ENCODE measurements at regions of chr12 and their contacts with region 1.

Region 1: GRCh38 chr12:26195641-26196420 is 458 bp downstream of the SSPN start:
- DNase-seq: peak; percentile 51 to 85
- H3K4me3 ChIP-seq: peak overlapping the region; percentile 76
- H3K27ac ChIP-seq: peak overlapping the region; percentile 87 to 92
- H3K4me1 ChIP-seq: peaks cover 0 to 40% (median 30%) of the 10 kb centered on the region in 4 donors
- H3K27me3 ChIP-seq: no peaks in the 10 kb centered on the region
- CTCF ChIP-seq: peak in 1 of 2 experiments; percentile 5

Region 2: DNA sequence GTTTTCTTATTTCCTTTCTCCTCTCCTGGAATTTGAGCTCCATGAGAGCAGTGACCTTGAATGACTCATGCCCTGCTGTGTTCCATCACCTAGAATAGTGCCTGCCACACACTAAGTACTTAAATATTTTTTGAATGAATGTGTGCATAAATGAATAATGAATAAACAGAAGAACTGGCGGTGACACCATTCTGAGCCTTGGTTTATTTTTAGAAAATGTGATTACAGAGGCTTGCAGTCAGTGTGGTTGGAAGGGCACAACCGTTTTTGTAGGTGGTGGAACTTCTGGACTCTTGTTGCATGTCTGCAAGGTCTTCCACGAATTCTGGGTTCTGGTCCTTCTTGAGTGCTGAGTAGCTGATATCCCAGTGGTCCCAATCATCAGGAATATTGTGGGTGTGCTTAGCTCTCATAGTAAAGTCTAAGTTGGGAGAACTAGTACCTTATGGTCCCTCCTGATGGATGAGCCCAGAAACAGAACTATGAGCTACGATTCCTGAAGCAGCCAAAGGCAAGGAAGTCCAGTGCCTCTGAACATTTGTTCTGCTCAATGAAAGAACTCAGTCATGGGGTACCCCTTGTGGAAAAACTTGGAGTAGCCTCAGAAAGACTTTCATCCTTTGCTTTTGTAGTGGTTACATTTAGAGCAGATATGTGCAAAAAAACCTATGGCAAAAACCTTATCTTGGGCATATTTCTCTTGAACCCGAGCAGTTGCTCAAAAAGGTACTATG is 42.2 kb before region 1 on chr12:
- intact Hi-C with region 1: loop called (anchors 2 kb)
- DNase-seq: no peak
- H3K4me3 ChIP-seq: no peak overlapping the region
- H3K27ac ChIP-seq: peak overlapping the region in 1 of 2 donors; percentile 11
- H3K4me1 ChIP-seq: peaks cover 0 to 35% (median 28%) of the 10 kb centered on the region in 4 donors
- H3K27me3 ChIP-seq: no peaks in the 10 kb centered on the region
- CTCF ChIP-seq: no peak

Region 3: GRCh38 chr12:26274441-26275312 is 78.8 kb after region 1 on chr12:
- intact Hi-C with region 1: loop called (anchors 5 kb)
- DNase-seq: peak; percentile 93 to 94
- H3K4me3 ChIP-seq: no peak overlapping the region
- H3K27ac ChIP-seq: peak overlapping the region; percentile 67 to 85
- H3K4me1 ChIP-seq: peaks cover 0 to 43% (median 37%) of the 10 kb centered on the region in 4 donors
- H3K27me3 ChIP-seq: no peaks in the 10 kb centered on the region
- CTCF ChIP-seq: no peak

Region 4: DNA sequence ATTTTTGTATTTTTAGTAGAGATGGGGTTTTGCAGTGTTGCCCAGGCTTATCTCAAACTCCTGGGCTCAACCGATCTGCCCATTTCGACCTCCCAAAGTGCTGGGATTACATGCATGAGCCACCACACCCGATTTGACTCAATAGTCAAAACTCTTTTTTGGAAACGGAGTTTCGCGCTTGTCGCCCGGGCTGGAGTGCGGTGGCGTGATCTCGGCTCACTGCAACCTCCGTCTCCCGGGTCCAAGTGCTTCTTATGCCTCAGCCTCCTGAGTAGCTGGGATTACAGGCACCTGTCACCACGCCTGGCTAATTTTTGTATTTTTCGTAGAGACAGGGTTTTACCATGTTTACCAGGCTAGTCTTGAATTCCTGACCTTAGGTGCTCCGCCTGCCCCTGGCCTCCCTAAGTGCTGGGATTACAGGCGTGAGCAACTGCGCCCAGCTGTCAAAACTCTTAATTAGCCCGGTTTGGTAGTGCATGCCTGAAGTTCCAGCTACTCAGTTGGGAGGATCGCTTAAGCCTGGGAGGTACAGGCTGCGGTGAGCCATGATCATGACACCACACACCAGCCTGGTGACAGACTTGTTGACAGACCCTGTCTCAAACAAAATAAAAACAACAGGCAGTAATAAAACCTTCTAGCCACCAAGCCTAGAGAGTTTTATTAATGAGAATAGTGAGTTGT is 838.9 kb after region 1 on chr12:
- intact Hi-C with region 1: no loop called
- DNase-seq: no peak
- H3K4me3 ChIP-seq: no peak overlapping the region
- H3K27ac ChIP-seq: no peak overlapping the region
- H3K4me1 ChIP-seq: no peaks in the 10 kb centered on the region
- H3K27me3 ChIP-seq: no peaks in the 10 kb centered on the region
- CTCF ChIP-seq: no peak